ENCODE measurements at regions of chr14 and their contacts with region 1.

Region 1: GRCh38 chr14:105314287-105315200 is at the start of gene PACS2:
- DNase-seq: no peak
- H3K4me3 ChIP-seq: peak within 1 kb of the TSS; percentile 73
- CTCF ChIP-seq: no peak

Region 2: DNA sequence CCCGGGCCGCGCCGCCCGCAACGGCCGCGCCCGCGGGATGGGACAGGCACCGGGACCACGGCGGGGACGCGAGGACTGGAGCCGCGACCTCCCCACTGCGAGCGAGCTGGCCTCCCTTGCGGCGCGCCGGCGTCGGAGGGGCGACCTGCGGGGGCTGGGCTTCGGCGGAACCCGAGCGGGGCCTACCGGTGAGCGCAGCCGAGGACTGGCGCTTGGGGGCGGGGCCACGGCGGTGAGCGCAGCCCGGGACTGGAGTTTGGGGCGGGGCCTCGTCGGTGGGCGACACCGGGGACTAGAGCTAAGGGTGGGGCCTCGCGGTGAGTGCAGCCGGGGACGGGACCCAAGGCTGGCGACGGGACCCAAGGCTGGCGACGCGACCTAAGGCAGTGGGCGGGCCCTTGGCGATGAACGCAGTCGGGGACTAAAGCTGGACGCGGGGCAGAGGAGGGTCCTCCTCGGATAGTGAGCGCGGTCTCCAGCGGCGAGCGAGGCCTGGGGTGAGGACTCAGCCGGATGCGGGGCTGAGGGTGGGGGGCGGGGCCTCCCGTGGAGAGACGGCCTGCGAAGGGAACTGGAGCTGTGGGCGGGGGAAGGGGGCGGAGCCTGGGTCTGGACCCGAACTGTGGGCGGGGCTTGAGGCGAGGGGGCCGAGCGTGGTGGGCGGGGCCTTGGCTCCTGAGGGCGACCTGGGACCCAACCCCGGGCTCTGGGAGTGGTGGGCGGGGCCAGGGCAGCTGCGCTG is 13.6 kb before region 1 on chr14 and contains the start of gene BRF1:
- CTCF ChIA-PET with region 1: interaction called, 3 read pairs
- POLR2A ChIA-PET with region 1: interaction called, 19 read pairs
- DNase-seq: no peak
- H3K4me3 ChIP-seq: peak within 1 kb of the TSS; percentile 89
- CTCF ChIP-seq: no peak

Region 3: DNA sequence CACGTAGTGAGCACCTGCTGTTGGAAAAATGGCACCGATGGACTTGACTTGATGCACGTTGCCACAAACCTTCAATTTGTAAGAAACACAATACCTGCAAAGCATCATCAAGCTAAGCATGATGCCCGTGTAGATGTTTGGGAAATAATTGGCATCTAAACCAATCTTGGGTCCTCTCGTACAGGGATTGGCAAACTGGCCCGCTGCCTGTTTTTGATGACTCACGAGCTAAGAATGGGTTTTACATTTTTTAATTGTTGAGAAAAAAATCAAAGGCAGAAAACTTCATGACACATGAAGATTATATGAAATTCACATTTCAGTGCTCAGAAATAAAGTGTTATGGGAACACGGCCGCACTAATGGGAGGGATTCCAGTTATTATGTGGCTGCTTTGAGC is 116.0 kb after region 1 on chr14:
- CTCF ChIA-PET with region 1: no interaction called
- POLR2A ChIA-PET with region 1: no interaction called
- DNase-seq: peak; percentile 9
- H3K4me3 ChIP-seq: no peak overlapping the region
- CTCF ChIP-seq: no peak